ENCODE measurements at regions of chr10 and their contacts with region 1.

Region 1: DNA sequence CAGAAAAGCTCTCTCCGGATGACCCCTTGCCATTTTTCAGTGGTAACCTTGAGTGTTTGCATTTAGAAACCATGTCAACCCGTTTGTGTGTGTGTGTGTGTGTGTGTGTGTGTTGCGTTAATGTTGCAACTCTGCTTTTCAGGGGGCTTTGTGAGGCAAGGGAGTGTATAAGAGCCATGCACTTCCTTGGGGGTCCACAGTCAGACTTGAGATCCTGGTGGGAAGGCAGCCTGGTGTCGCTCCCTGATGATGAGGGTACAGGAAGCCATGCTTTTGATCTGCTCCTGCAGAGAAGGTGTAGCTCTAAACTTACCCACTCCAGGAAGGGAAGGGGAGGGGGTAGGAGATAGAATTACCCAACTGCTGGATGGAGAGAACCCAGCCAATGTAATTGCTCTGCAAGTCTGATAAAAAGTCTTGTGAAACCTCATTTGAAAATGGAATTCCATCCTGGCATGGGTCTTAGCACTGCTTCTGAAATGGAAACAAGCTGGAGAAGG is 10.7 kb downstream of the GRK5 start:
- DNase-seq: peak; percentile 69
- ATAC-seq: peak; percentile 52
- H3K4me3 ChIP-seq: no peak overlapping the region
- H3K27ac ChIP-seq: peak overlapping the region; percentile 51; the same call in 1 of the 2 replicates
- H3K4me1 ChIP-seq: peaks cover 38% of the 10 kb centered on the region
- H3K27me3 ChIP-seq: no peaks in the 10 kb centered on the region
- CTCF ChIP-seq: no peak
- POLR2A ChIP-seq: no peak
- RAD21 ChIP-seq: no peak

Region 2: GRCh38 chr10:118754720-118755480 is 463.1 kb before region 1 on chr10 and contains the start of gene CACUL1:
- CTCF ChIA-PET with region 1: no interaction called
- POLR2A ChIA-PET with region 1: no interaction called
- dilution Hi-C with region 1: no loop called
- in situ Hi-C with region 1: no loop called
- intact Hi-C with region 1: no loop called
- DNase-seq: peak; percentile 100
- ATAC-seq: peak; percentile 94
- H3K4me3 ChIP-seq: peak within 1 kb of the TSS; percentile 88
- H3K27ac ChIP-seq: peak within 1 kb of the TSS; percentile 77
- H3K4me1 ChIP-seq: no peaks in the 10 kb centered on the region
- H3K27me3 ChIP-seq: 0 out of 2 replicates have a peak, but pooled peaks cover 1% of the 10 kb centered on the region
- CTCF ChIP-seq: no peak
- POLR2A ChIP-seq: peak; percentile 85
- RAD21 ChIP-seq: no peak
- total RNA-seq, gene CACUL1: 23.5 and 24.7 TPM in 2 replicates

Region 3: GRCh38 chr10:119235356-119235755 is 17.3 kb after region 1 on chr10:
- CTCF ChIA-PET with region 1: interaction called, 4 read pairs
- POLR2A ChIA-PET with region 1: no interaction called
- dilution Hi-C with region 1: no loop called
- in situ Hi-C with region 1: no loop called
- intact Hi-C with region 1: loop called (anchors 2 kb)
- DNase-seq: peak; percentile 44
- ATAC-seq: no peak
- H3K4me3 ChIP-seq: no peak overlapping the region
- H3K27ac ChIP-seq: no peak overlapping the region
- H3K4me1 ChIP-seq: peaks cover 35% of the 10 kb centered on the region
- H3K27me3 ChIP-seq: no peaks in the 10 kb centered on the region
- CTCF ChIP-seq: no peak
- POLR2A ChIP-seq: no peak
- RAD21 ChIP-seq: no peak